WTC11 (cell line): ENCODE measurements at regions of chr5 and their contacts with region 1.

Region 1: GRCh38 chr5:164504141-164504772 is 998.8 kb downstream of the MAT2B start:
- DNase-seq: peak; percentile 46
- ATAC-seq: peak; percentile 72
- H3K4me3 Mint-ChIP-seq: no peak overlapping the region
- H3K27ac Mint-ChIP-seq: no peak overlapping the region
- H3K4me1 Mint-ChIP-seq: peaks cover 17% of the 10 kb centered on the region
- H3K27me3 Mint-ChIP-seq: no peaks in the 10 kb centered on the region
- CTCF ChIP-seq: peak; percentile 75

Region 2: DNA sequence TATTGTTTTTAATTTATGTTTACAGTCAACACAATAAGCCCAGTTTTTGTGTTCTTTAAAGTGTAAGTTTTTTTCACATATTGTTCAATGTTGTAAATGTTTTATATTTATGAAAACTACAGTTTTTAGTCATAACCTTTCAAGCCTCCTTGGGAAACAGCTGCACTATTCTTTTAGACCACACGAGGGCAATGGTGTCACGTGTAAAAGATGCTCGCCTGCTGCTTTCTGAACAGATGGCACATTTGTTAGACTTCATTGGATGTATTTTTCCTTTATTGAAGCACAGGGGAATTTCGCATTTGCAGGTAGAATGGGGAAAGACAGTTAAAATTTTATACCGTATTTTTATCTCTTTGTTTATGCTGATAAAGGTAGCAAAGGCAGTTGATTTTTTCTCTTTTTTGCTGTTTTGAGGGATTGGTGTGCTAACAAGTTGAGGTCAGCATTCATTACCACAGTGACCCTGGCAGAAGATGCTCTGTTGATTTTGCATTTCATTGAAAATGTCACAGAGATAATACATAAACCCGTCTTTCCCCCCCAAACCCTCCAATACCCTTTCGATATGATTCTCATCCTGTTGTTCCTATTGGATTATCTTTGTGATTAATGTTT is 939.8 kb before region 1 on chr5:
- CTCF ChIA-PET with region 1: interaction called, 11 read pairs
- POLR2A ChIA-PET with region 1: no interaction called
- DNase-seq: peak; percentile 57
- ATAC-seq: no peak
- H3K4me3 Mint-ChIP-seq: no peak overlapping the region
- H3K27ac Mint-ChIP-seq: no peak overlapping the region
- H3K4me1 Mint-ChIP-seq: peaks cover 68% of the 10 kb centered on the region
- H3K27me3 Mint-ChIP-seq: peaks cover 21% of the 10 kb centered on the region
- CTCF ChIP-seq: peak; percentile 86

Region 3: DNA sequence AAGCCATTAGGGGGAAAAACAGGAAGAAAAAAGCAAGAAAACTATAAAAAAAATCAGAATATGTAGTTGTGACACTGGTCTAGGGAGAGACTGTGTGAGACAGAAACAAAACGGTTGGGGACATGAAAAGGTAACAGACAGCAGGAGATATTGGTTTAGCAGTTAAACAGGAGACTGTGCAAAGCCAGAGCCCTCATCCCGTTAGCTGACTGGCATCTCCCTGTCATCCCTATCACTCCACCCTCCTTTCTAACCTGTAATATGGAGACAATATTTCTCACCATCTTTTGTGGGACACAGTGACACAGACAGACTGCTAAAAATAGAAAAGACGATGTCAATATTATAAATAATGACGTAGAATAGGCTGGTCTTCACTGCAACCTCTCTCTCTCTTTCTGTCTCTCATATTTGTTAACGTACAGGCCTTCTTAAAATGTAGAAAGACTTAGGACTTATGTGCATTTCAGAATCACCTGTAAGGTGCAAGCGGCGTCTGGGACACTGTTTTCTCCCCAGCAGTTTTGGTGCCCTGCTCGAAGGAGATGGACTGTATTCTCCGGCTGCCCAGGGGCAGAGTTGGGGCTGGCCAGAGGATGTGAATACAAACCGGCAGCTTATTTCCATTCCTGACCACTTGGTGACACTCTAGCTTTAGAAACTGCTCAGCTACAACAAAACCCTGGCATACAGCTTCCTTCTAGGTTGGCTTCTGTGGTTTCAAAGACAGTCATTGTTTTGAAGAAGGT is 808.3 kb before region 1 on chr5:
- CTCF ChIA-PET with region 1: interaction called, 11 read pairs
- POLR2A ChIA-PET with region 1: no interaction called
- DNase-seq: peak; percentile 53
- ATAC-seq: peak; percentile 99
- H3K4me3 Mint-ChIP-seq: no peak overlapping the region
- H3K27ac Mint-ChIP-seq: no peak overlapping the region; the same call in 1 of the 2 replicates
- H3K4me1 Mint-ChIP-seq: peaks cover 9% of the 10 kb centered on the region
- H3K27me3 Mint-ChIP-seq: no peaks in the 10 kb centered on the region
- CTCF ChIP-seq: 0 out of 2 replicates have a peak, but pooled peaks have one; percentile 27

Region 4: DNA sequence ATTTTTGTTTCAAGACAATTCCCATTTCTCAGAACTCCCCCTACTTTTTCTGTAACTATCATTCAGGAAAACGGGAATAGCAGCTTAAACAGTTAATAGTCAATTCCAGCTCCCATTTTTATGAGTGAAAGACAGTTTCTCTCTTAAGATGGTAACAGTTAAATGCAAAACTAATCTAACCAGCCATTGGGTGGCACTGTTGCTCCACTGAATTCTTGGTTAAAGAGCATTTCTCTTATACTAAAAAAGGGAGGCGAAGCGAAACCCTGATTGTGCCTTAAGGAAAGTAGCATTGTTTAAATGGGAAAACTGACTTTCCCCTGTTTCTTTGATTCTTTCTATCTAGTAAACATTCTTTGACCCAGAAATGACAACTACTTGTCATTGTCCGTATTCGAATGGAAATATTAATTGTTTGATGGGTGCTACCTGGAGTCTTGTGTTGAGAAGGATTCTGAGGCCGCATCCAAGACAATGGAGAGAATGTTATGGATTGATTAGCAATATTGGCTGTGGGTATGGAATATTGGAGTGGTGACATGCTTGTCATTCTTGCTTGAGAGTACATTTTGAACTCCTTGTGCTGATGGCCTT is 491.1 kb before region 1 on chr5:
- CTCF ChIA-PET with region 1: interaction called, 14 read pairs
- POLR2A ChIA-PET with region 1: no interaction called
- DNase-seq: peak; percentile 63
- ATAC-seq: peak; percentile 65
- H3K4me3 Mint-ChIP-seq: no peak overlapping the region
- H3K27ac Mint-ChIP-seq: no peak overlapping the region
- H3K4me1 Mint-ChIP-seq: peaks cover 6% of the 10 kb centered on the region
- H3K27me3 Mint-ChIP-seq: no peaks in the 10 kb centered on the region
- CTCF ChIP-seq: peak; percentile 38